ENCODE measurements at regions of chr4 and their contacts with region 1.

Region 1: GRCh38 chr4:159504684-159505083 is 401.8 kb downstream of the RAPGEF2 start:
- DNase-seq: no peak
- ATAC-seq: no peak
- H3K4me3 ChIP-seq: no peak overlapping the region
- H3K27ac ChIP-seq: no peak overlapping the region
- H3K4me1 ChIP-seq: peaks cover 0 to 4% (median 0%) of the 10 kb centered on the region in 9 donors
- H3K27me3 ChIP-seq: peaks cover 0 to 51% (median 28%) of the 10 kb centered on the region in 7 donors
- CTCF ChIP-seq: no peak

Region 2: DNA sequence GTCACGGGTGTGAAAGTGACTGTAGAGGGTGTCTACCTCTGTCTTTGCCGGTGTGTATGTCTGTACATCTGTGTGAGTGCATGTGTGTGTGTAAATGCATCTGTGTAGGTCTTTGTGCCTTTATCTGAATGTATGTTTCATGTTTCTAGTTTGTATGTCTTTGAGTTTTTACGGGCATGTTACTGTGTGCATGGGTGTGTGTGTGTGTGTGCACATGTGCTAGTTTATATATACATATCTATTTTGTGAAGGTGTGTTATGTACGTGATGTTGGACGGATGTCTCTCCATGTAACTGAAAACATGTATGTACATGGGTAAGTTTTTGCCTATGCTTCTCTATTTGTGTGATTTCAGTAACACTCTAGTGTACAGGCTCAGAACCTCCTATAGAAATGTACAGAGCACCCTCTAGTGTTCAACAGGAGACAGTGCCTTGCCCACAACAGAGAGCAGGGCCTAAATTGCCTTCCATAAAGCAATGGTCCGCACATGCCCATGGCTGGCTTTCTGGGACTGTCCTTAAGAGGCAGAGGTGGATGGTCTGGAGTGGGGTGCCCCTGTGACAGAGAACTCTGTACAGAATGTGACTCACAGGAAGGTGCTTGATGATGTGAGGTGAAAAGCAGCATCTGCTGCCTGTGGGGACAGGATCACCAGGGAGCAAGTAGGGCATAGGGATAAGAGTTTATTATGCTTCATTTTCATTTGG is 58.3 kb before region 1 on chr4:
- intact Hi-C with region 1: no loop called
- DNase-seq: peak; percentile 16 to 59
- ATAC-seq: peak; percentile 96 to 99 (median 97)
- H3K4me3 ChIP-seq: no peak overlapping the region
- H3K27ac ChIP-seq: peak overlapping the region in 4 of 10 donors; percentile 1 to 36 (median 31)
- H3K4me1 ChIP-seq: peaks cover 2 to 18% (median 10%) of the 10 kb centered on the region in 9 donors
- H3K27me3 ChIP-seq: no peaks in the 10 kb centered on the region
- CTCF ChIP-seq: peak; percentile 79 to 96 (median 90)

Region 3: DNA sequence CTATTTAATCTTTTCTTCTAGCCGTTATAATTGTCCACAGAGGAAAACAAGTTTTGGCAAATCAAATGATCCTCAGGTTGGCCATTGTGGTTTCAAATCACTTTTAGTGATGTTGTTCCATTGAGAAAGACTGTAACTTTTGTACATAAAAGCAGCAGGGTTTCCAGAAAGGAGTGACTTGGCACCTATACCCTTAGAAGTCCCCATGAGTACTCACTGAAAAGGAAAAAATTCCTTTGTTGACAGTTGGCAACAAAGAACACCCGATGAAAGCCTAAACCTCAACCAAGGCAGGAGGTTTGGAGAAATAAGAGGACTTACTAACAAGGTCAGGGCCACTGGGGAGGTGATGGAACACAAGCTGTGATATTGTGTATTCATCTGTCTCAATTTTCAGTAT is 72.6 kb after region 1 on chr4:
- intact Hi-C with region 1: no loop called
- DNase-seq: no peak
- ATAC-seq: no peak
- H3K4me3 ChIP-seq: no peak overlapping the region
- H3K27ac ChIP-seq: no peak overlapping the region
- H3K4me1 ChIP-seq: no peaks in the 10 kb centered on the region
- H3K27me3 ChIP-seq: no peaks in the 10 kb centered on the region
- CTCF ChIP-seq: no peak

Region 4: GRCh38 chr4:159735281-159736207 is 230.9 kb after region 1 on chr4:
- intact Hi-C with region 1: loop called in 1 of 10 experiments (anchors 5 kb)
- DNase-seq: no peak
- ATAC-seq: no peak
- H3K4me3 ChIP-seq: no peak overlapping the region
- H3K27ac ChIP-seq: no peak overlapping the region
- H3K4me1 ChIP-seq: no peaks in the 10 kb centered on the region
- H3K27me3 ChIP-seq: no peaks in the 10 kb centered on the region
- CTCF ChIP-seq: no peak